ENCODE measurements at regions of chr19 and their contacts with region 1.

Region 1: GRCh38 chr19:10194500-10195289 is at the start of gene DNMT1:
- DNase-seq: peak; percentile 95 to 96
- ATAC-seq: peak; percentile 97 to 99 (median 97)
- H3K4me3 ChIP-seq: peak within 1 kb of the TSS; percentile 67 to 96 (median 84)
- H3K27ac ChIP-seq: peak within 1 kb of the TSS; percentile 57 to 94 (median 88)
- H3K4me1 ChIP-seq: peaks cover 2 to 66% (median 33%) of the 10 kb centered on the region in 9 donors
- H3K27me3 ChIP-seq: no peaks in the 10 kb centered on the region
- CTCF ChIP-seq: no peak
- total RNA-seq, gene DNMT1: 11.8 to 36.4 (median 21.6) TPM

Region 2: DNA sequence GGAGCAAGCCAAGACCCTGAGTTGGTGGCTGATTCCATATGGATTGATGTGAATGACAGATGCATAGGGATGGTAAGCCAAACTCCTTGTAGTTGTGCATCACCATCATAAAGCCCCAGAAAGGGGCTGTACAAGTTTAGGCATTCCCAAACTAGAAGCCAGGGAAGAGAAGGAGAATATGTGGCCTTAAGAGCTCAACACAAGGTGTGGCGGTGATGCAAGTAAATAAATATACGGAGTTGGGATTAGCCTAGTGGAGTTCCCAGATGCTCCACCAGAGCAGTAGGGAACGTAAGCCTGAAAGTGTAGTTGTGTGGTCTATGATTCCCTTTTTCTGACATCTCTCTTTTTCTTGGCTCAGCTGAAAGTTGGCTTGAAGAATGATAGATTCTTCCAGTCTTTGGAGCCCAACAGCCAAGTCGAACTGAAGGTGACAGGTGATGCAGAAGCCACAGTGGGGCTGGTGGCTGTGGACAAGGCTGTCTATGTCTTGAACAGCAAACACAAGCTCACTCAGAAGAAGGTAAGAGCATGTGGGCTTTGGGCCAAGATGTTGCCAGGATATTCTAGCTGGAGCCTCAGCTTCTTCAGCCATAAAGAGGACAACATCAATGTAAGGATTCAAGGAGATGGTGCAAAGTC is 151.3 kb before region 1 on chr19:
- intact Hi-C with region 1: no loop called
- DNase-seq: no peak
- ATAC-seq: no peak
- H3K4me3 ChIP-seq: no peak overlapping the region
- H3K27ac ChIP-seq: no peak overlapping the region
- H3K4me1 ChIP-seq: no peaks in the 10 kb centered on the region
- H3K27me3 ChIP-seq: peaks cover 0 to 27% (median 13%) of the 10 kb centered on the region in 7 donors
- CTCF ChIP-seq: no peak

Region 3: DNA sequence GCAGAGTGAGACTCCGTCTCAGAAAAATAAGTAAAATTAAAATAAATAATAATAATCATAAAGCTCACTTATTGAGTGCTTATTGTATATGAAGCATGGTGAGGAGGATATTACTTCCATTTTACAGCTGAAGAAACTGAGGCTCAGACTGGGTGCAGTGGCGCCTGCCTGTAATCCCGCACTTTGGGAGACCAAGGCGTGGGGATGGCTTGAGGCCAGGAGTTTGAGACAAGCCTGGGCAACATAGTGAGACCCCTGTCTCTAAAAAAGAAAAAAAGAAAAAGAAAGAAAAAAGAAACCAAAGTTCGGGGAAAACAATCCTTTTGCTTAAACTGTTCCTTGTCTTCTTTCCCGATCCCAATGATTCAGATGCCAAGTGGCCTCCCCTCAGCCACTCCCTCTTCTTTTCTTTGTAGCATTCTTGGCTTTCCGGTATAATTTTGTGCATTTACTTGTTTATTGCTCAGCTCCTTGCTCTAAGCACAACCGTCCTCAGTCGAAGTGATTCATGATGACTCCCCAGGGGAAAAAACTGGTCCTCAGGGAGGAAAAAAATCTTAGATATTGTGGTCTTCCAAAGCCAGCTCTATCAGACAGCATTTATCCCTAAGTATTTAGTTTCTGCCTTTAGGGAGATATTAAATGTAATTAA is 74.0 kb before region 1 on chr19:
- intact Hi-C with region 1: loop called in 1 of 10 experiments (anchors 10 kb)
- DNase-seq: no peak
- ATAC-seq: peak in 1 of 8 donors; percentile 30
- H3K4me3 ChIP-seq: peak overlapping the region in 3 of 10 donors; percentile 83 to 94 (median 93)
- H3K27ac ChIP-seq: peak overlapping the region in 2 of 10 donors; percentile 15 to 48
- H3K4me1 ChIP-seq: peaks cover 8 to 29% (median 16%) of the 10 kb centered on the region in 9 donors
- H3K27me3 ChIP-seq: no peaks in the 10 kb centered on the region
- CTCF ChIP-seq: no peak

Region 4: GRCh38 chr19:10230861-10231611 is 36.3 kb after region 1 on chr19 and contains the start of gene S1PR2:
- intact Hi-C with region 1: loop called in 3 of 10 experiments (anchors 5 kb)
- DNase-seq: peak; percentile 86 to 87
- ATAC-seq: peak; percentile 59 to 84 (median 72)
- H3K4me3 ChIP-seq: peak within 1 kb of the TSS; percentile 70 to 99 (median 94)
- H3K27ac ChIP-seq: peak within 1 kb of the TSS; percentile 81 to 99 (median 94)
- H3K4me1 ChIP-seq: peaks cover 8 to 65% (median 54%) of the 10 kb centered on the region in 9 donors
- H3K27me3 ChIP-seq: peaks cover 0 to 7% (median 0%) of the 10 kb centered on the region in 7 donors
- CTCF ChIP-seq: peak in 1 of 9 donors; percentile 18
- total RNA-seq, gene S1PR2: 1.8 to 12.2 (median 3.3) TPM

Region 5: GRCh38 chr19:10238172-10238783 is 43.6 kb after region 1 on chr19:
- intact Hi-C with region 1: loop called in 4 of 10 experiments (anchors 5 to 10 kb)
- DNase-seq: peak; percentile 65 to 71
- ATAC-seq: peak; percentile 26 to 77 (median 49)
- H3K4me3 ChIP-seq: no peak overlapping the region
- H3K27ac ChIP-seq: peak overlapping the region in 7 of 10 donors; percentile 40 to 87 (median 83)
- H3K4me1 ChIP-seq: peaks cover 6 to 38% (median 28%) of the 10 kb centered on the region in 9 donors
- H3K27me3 ChIP-seq: no peaks in the 10 kb centered on the region
- CTCF ChIP-seq: no peak

Region 6: GRCh38 chr19:10245189-10245939 is 50.7 kb after region 1 on chr19:
- intact Hi-C with region 1: loop called in 3 of 10 experiments (anchors 2 to 10 kb)
- DNase-seq: no peak
- ATAC-seq: no peak
- H3K4me3 ChIP-seq: no peak overlapping the region
- H3K27ac ChIP-seq: no peak overlapping the region
- H3K4me1 ChIP-seq: peaks cover 0 to 7% (median 4%) of the 10 kb centered on the region in 9 donors
- H3K27me3 ChIP-seq: no peaks in the 10 kb centered on the region
- CTCF ChIP-seq: no peak

Region 7: DNA sequence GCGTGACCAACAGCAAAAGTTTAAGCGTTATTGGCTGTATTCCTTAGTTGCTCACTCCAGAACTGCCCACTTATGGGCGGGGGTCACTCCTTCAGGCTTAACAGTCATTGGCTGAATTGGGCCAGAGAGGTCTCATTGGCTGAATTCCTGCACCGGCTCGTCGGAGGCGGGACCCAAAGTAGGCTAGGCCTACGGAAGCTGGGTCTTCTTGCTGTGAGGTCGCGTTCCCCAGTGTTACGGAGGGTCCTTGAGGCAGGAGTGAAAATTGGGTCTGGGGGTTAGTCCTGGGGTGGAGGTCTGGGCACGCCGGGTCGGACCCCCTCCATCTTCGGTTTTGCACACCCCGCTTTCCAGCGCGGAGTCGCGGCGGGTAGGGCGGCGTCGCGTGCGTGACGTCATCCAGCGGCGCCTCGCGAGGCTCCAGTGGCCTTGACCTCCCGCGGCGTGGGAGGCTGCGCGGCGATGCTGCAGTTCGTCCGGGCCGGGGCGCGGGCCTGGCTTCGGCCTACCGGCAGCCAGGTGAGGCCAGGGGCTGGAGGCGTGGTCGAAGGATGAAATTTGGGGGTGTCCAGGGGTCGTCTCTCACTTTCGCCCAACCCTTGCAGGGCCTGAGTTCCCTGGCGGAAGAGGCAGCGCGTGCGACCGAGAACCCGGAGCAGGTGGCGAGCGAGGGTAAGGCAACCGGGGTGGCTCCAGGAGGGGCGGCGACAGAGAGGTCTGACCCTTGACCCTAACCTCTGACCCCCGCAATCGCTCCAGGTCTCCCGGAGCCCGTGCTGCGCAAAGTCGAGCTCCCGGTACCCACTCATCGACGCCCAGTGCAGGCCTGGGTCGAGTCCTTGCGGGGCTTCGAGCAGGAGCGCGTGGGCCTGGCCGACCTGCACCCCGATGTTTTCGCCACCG is 57.3 kb after region 1 on chr19 and contains the start of gene MRPL4:
- intact Hi-C with region 1: loop called in 3 of 10 experiments (anchors 2 to 10 kb)
- DNase-seq: peak; percentile 91 to 98
- ATAC-seq: peak; percentile 94 to 97 (median 96)
- H3K4me3 ChIP-seq: peak within 1 kb of the TSS; percentile 47 to 99 (median 82)
- H3K27ac ChIP-seq: peak within 1 kb of the TSS; percentile 44 to 95 (median 88)
- H3K4me1 ChIP-seq: peaks cover 0 to 32% (median 14%) of the 10 kb centered on the region in 9 donors
- H3K27me3 ChIP-seq: no peaks in the 10 kb centered on the region
- CTCF ChIP-seq: no peak
- total RNA-seq, gene MRPL4: 53.2 to 94.3 (median 69.0) TPM